Endothelial cell of umbilical vein (primary cell): ENCODE measurements at regions of chr3 and their contacts with region 1.

Region 1: GRCh38 chr3:13657660-13658435 is 108.9 kb downstream of the FBLN2 start:
- DNase-seq: peak; percentile 29
- H3K4me3 ChIP-seq: no peak overlapping the region
- H3K27ac ChIP-seq: no peak overlapping the region
- H3K4me1 ChIP-seq: no peaks in the 10 kb centered on the region
- H3K27me3 ChIP-seq: no peaks in the 10 kb centered on the region
- CTCF ChIP-seq: peak; percentile 76 to 92
- POLR2A ChIP-seq: no peak

Region 2: GRCh38 chr3:13495921-13496723 is 161.7 kb before region 1 on chr3:
- CTCF ChIA-PET with region 1: interaction called, 746 read pairs
- POLR2A ChIA-PET with region 1: no interaction called
- dilution Hi-C with region 1: no loop called
- intact Hi-C with region 1: no loop called
- DNase-seq: peak; percentile 73
- H3K4me3 ChIP-seq: no peak overlapping the region
- H3K27ac ChIP-seq: no peak overlapping the region
- H3K4me1 ChIP-seq: no peaks in the 10 kb centered on the region
- H3K27me3 ChIP-seq: no peaks in the 10 kb centered on the region
- CTCF ChIP-seq: peak; percentile 87 to 89
- POLR2A ChIP-seq: no peak

Region 3: GRCh38 chr3:13782501-13782900 is 124.7 kb after region 1 on chr3:
- CTCF ChIA-PET with region 1: no interaction called
- POLR2A ChIA-PET with region 1: no interaction called
- dilution Hi-C with region 1: no loop called
- intact Hi-C with region 1: no loop called
- DNase-seq: peak; percentile 5
- H3K4me3 ChIP-seq: no peak overlapping the region
- H3K27ac ChIP-seq: no peak overlapping the region
- H3K4me1 ChIP-seq: no peaks in the 10 kb centered on the region
- H3K27me3 ChIP-seq: no peaks in the 10 kb centered on the region
- CTCF ChIP-seq: no peak
- POLR2A ChIP-seq: no peak

Region 4: DNA sequence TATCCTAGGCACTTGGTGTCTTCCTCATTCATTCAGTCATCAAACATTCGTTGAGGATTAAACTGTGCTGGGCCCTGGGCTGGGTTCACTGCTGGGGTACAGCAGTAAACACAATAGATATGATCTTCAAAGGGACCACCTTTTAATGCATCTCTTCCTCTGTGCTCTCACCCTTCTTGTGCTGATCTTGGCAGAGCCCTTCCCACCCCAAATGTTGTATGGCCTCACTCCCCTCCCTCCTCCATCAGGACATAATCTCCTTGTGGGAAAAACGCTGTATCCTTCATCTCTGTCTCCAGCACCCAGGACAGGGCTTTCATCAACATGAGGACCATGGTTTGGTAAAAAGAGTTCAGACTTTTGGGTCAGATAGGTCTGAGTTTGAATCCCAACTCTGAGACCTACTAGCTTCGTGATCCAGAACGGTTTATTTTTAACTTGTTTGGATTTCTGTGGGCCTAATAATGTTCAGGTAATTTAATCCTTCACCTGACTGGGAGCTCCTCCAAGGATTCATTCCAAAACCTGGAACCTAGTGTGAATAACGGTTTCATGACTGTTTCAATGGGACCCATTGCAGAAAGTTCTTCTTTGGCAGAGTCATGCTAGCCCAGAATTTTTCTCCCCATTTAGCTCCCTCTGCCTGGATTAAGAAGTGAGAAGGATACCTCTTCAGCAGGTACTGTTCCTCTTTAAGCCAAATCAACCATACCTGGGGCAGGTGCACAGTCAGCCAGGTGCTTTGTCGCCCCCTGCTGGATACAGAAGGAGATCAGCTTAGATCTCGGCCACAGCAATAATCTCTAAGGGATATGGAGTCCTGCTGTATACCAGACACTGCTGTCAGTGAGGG is 227.2 kb after region 1 on chr3:
- CTCF ChIA-PET with region 1: interaction called, 11 read pairs
- POLR2A ChIA-PET with region 1: no interaction called
- dilution Hi-C with region 1: no loop called
- intact Hi-C with region 1: loop called (anchors 1 kb)
- DNase-seq: no peak
- H3K4me3 ChIP-seq: no peak overlapping the region
- H3K27ac ChIP-seq: no peak overlapping the region
- H3K4me1 ChIP-seq: no peaks in the 10 kb centered on the region
- H3K27me3 ChIP-seq: peaks cover 16% of the 10 kb centered on the region in 2 experiments
- CTCF ChIP-seq: peak; percentile 55 to 59
- POLR2A ChIP-seq: no peak

Region 5: GRCh38 chr3:14113965-14114635 is 456.3 kb after region 1 on chr3:
- CTCF ChIA-PET with region 1: interaction called, 14 read pairs
- POLR2A ChIA-PET with region 1: no interaction called
- dilution Hi-C with region 1: no loop called
- intact Hi-C with region 1: no loop called
- DNase-seq: no peak
- H3K4me3 ChIP-seq: no peak overlapping the region
- H3K27ac ChIP-seq: no peak overlapping the region
- H3K4me1 ChIP-seq: no peaks in the 10 kb centered on the region
- H3K27me3 ChIP-seq: no peaks in the 10 kb centered on the region
- CTCF ChIP-seq: peak in 1 of 2 donors; percentile 8
- POLR2A ChIP-seq: no peak

Region 6: DNA sequence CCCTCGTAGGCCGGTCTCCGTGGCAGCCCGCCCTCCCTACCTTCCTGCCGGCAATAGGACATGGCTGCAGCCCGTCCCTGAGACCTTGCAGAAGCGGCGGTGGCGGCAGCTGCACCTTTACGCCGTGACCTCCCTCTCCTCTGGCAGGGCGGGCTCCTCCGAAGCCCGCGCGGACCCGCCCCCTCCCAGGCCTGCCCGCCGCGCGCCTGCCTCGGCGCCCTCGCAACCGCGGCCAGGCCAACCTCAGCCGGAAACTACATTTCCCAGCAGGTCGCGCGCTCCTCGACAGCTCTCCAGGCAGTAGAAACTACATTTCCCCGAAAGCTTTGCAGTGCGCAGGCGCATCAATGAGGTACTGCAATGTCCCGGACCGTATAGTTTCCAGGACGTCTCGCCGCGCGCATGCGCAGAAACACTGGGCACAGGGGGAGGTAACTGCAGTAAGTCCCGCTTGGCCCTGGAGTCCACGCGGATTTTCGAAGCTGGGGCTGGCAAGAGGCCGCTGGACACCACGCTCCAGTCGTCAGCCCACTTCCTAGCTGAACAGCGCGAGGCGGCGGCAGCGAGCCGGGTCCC is 466.9 kb after region 1 on chr3 and contains the starts of genes CHCHD4 and TMEM43:
- CTCF ChIA-PET with region 1: no interaction called
- POLR2A ChIA-PET with region 1: no interaction called
- dilution Hi-C with region 1: no loop called
- intact Hi-C with region 1: loop called (anchors 5 kb)
- DNase-seq: peak; percentile 99
- H3K4me3 ChIP-seq: peak within 1 kb of the TSS; percentile 66 to 90 (median 67)
- H3K27ac ChIP-seq: peak within 1 kb of the TSS; percentile 61
- H3K4me1 ChIP-seq: peaks cover 22% of the 10 kb centered on the region
- H3K27me3 ChIP-seq: no peaks in the 10 kb centered on the region
- CTCF ChIP-seq: peak in 1 of 2 donors; percentile 1
- POLR2A ChIP-seq: peak; percentile 58
- total RNA-seq, gene CHCHD4: 12.4 and 13.6 TPM in 2 replicates
- total RNA-seq, gene TMEM43: 69.6 and 80.6 TPM in 2 replicates